A549 (cell line): ENCODE measurements at regions of chr2 and their contacts with region 1.

Region 1: DNA sequence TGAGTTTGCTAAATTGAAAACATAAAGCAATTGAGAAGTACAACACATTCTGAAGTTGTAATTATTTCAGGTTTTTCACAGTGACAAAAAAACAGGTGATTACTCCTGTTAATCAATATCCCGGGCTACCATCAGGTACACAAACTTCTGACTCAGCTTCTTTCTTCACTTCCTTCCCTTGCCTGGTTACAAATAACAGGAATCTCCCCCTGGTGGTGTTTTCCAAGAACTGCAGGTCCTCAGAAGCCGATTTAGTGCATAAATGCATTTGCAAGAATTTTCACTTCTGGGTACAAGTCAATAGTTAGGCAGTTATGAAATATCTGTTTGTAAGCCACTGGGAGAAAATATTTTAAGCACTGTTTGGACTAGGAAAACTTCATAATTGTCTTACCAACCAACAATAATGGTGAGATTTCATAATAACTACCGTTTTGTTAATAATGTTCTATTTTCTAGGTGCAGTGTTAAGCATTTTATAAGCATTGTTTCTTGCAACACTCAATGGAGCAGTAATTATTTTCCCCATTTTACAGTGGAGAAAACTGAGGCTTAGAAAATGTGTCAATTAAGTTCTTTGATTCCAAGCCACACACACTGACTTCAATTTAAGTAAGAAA is 12.4 kb upstream of the GMCL1 start:
- DNase-seq: peak; percentile 78 to 93
- ATAC-seq: peak; percentile 66 to 74; a peak in 5 of 6 replicates
- H3K4me3 ChIP-seq: no peak overlapping the region
- H3K27ac ChIP-seq: peak overlapping the region; percentile 43 to 45; a peak in 5 of 6 replicates
- H3K4me1 ChIP-seq: peaks cover 27% of the 10 kb centered on the region
- CTCF ChIP-seq: peak; percentile 97
- EP300 ChIP-seq: no peak
- POLR2A ChIP-seq: no peak
- RAD21 ChIP-seq: peak; percentile 88 to 93

Region 2: DNA sequence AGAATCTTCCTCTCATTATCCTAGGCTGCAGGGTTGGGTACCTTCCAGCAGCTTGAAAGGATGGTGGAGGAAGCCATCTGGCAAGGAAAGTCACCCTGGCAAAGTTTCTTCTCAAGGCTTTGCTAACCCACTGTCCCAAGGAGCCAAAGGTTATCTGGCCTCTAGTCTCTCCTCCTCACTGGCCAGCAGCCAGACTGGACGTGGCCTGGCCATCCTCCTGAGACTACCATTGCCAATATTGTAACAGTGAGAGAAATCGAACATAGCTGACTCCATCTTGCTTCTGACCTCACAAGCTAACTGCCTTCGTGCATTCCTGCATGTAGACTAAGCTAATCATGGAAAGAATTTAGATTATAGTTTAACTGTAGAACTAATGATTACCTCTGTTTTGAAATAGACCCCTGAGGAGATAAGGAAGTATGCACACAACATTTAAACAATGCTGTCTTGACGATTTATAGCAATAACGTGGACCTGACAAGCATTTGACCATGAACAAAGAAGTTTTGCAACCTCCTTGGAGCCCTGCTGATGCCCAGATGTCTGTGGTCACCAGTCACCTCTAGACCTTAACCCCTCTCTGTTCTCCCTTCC is 82.9 kb before region 1 on chr2:
- CTCF ChIA-PET with region 1: interaction called, 44 read pairs
- POLR2A ChIA-PET with region 1: no interaction called
- DNase-seq: peak in 1 of 2 experiments; percentile 82
- ATAC-seq: peak; percentile 60 to 83
- H3K4me3 ChIP-seq: no peak overlapping the region
- H3K27ac ChIP-seq: peak overlapping the region; percentile 67 to 79
- H3K4me1 ChIP-seq: peaks cover 41% of the 10 kb centered on the region
- CTCF ChIP-seq: no peak
- EP300 ChIP-seq: peak; percentile 85 to 96; a peak in 4 of 5 replicates
- POLR2A ChIP-seq: no peak
- RAD21 ChIP-seq: peak; percentile 9 to 20; a peak in 1 of 5 replicates

Region 3: DNA sequence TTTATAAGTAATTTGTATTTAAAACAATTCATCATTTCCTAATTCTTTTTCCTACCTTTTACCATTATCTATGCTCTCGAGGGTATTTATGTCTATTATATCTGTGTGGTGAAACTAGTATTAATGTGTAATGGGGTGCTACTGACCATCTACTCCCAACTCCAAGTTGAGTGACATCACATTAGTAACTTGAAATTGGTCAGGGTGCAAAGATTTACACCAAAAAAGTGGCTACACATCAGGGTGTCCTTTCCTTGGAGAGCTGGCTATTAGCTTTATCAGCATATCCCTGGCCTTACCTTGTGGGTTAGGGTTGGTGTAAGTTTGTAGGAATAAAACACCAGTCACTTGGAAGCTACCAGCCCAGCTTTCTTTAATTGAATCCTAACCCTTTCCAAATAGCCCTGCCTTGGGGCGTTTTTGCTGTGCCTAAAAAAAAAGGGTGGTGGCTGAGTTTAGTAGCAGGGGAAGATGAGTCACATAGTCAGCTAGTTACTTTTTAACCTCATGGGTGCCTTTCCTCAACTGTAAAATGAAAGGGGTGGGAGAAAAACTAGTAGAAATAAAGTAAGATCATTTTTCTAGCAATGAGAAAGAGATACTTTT is 61.1 kb before region 1 on chr2:
- CTCF ChIA-PET with region 1: interaction called, 140 read pairs
- POLR2A ChIA-PET with region 1: interaction called, 5 read pairs
- DNase-seq: peak; percentile 75 to 86
- ATAC-seq: peak; percentile 82 to 88
- H3K4me3 ChIP-seq: peak overlapping the region; percentile 18; the same call in 2 of the 3 replicates
- H3K27ac ChIP-seq: peak overlapping the region; percentile 84 to 91
- H3K4me1 ChIP-seq: peaks cover 93% of the 10 kb centered on the region
- CTCF ChIP-seq: no peak
- EP300 ChIP-seq: peak; percentile 12 to 37; a peak in 2 of 5 replicates
- POLR2A ChIP-seq: no peak
- RAD21 ChIP-seq: peak; percentile 34 to 41; a peak in 2 of 5 replicates

Region 4: GRCh38 chr2:69770193-69771146 is 46.6 kb before region 1 on chr2:
- CTCF ChIA-PET with region 1: interaction called, 49 read pairs
- POLR2A ChIA-PET with region 1: no interaction called
- DNase-seq: peak; percentile 63 to 77
- ATAC-seq: peak; percentile 71 to 74
- H3K4me3 ChIP-seq: no peak overlapping the region
- H3K27ac ChIP-seq: peak overlapping the region; percentile 90 to 93
- H3K4me1 ChIP-seq: peaks cover 100% of the 10 kb centered on the region
- CTCF ChIP-seq: no peak
- EP300 ChIP-seq: peak in 1 of 2 experiments; percentile 31; a peak in 1 of 5 replicates
- POLR2A ChIP-seq: no peak
- RAD21 ChIP-seq: peak in 1 of 2 experiments; percentile 22; a peak in 1 of 5 replicates

Region 5: GRCh38 chr2:69789175-69789721 is 27.8 kb before region 1 on chr2:
- CTCF ChIA-PET with region 1: interaction called, 23 read pairs
- POLR2A ChIA-PET with region 1: no interaction called
- DNase-seq: peak; percentile 64 to 91
- ATAC-seq: peak; percentile 95 to 96
- H3K4me3 ChIP-seq: no peak overlapping the region
- H3K27ac ChIP-seq: peak overlapping the region; percentile 68 to 79
- H3K4me1 ChIP-seq: peaks cover 64% of the 10 kb centered on the region
- CTCF ChIP-seq: no peak
- EP300 ChIP-seq: no peak
- POLR2A ChIP-seq: no peak
- RAD21 ChIP-seq: no peak; a peak in 1 of 5 replicates

Region 6: DNA sequence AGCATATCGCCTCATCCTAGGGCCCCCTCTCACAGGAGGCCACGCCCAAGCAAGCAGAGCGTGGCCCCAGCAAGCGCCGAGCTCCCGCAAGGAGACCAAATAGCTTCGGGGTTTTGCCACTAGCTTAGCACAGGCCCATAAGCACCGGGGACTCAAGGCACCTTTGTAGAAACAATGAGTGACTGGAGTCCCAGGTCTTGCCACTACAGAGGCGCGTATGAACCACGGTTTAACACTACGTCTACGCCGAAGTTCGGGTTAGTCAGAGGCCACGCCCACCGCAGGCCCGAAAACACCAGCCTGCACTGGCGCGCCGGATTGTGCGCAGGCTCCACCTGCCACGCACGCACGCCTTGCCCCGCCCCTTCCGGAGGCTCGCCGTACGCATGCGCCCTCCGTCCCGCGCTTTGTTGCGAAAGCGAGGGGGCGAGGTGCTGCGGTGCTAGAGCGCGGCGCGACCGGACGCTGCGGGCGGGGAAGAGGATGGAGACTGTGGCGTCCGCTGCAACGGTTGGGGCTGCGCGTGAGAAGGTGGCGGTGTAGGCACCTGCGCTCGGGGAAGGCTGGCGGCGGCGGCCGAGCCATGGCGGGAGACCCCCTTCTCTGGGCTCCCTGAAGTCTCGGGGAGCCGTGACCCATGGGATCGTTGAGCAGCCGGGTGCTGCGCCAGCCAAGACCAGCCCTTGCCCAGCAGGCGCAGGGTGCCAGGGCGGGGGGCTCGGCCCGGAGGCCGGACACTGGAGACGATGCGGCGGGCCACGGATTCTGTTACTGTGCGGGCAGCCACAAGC is 12.4 kb after region 1 on chr2 and contains the start of gene GMCL1:
- CTCF ChIA-PET with region 1: interaction called, 48 read pairs
- POLR2A ChIA-PET with region 1: interaction called, 6 read pairs
- DNase-seq: peak; percentile 73 to 97
- ATAC-seq: peak; percentile 92 to 95
- H3K4me3 ChIP-seq: peak within 1 kb of the TSS; percentile 91
- H3K27ac ChIP-seq: peak within 1 kb of the TSS; percentile 86 to 88
- H3K4me1 ChIP-seq: peaks cover 15% of the 10 kb centered on the region
- CTCF ChIP-seq: no peak
- EP300 ChIP-seq: 0 out of 5 replicates have a peak, but pooled peaks of 1 of the 2 experiments have one; percentile 29
- POLR2A ChIP-seq: peak; percentile 72
- RAD21 ChIP-seq: no peak; a peak in 1 of 5 replicates
- polyA plus RNA-seq, gene GMCL1: 16.3 and 21.1 TPM in 2 replicates

Region 7: GRCh38 chr2:70241338-70241737 is 424.3 kb after region 1 on chr2:
- CTCF ChIA-PET with region 1: no interaction called
- POLR2A ChIA-PET with region 1: no interaction called
- DNase-seq: no peak
- ATAC-seq: no peak
- H3K4me3 ChIP-seq: no peak overlapping the region
- H3K27ac ChIP-seq: no peak overlapping the region
- H3K4me1 ChIP-seq: peaks cover 17% of the 10 kb centered on the region
- CTCF ChIP-seq: no peak
- EP300 ChIP-seq: no peak
- POLR2A ChIP-seq: no peak
- RAD21 ChIP-seq: no peak